ENCODE measurements at regions of chr21 and their contacts with region 1.

Region 1: GRCh38 chr21:16308269-16308668 is 578.5 kb downstream of the USP25 start:
- DNase-seq: no peak
- ATAC-seq: no peak
- H3K4me3 ChIP-seq: no peak overlapping the region
- H3K4me3 Mint-ChIP-seq: no peak overlapping the region
- H3K27ac ChIP-seq: no peak overlapping the region
- H3K27ac Mint-ChIP-seq: no peak overlapping the region
- H3K4me1 ChIP-seq: no peaks in the 10 kb centered on the region
- H3K4me1 Mint-ChIP-seq: peaks cover 3 to 7% (median 3%) of the 10 kb centered on the region in 3 donors
- H3K27me3 ChIP-seq: no peaks in the 10 kb centered on the region
- H3K27me3 Mint-ChIP-seq: no peaks in the 10 kb centered on the region

Region 2: DNA sequence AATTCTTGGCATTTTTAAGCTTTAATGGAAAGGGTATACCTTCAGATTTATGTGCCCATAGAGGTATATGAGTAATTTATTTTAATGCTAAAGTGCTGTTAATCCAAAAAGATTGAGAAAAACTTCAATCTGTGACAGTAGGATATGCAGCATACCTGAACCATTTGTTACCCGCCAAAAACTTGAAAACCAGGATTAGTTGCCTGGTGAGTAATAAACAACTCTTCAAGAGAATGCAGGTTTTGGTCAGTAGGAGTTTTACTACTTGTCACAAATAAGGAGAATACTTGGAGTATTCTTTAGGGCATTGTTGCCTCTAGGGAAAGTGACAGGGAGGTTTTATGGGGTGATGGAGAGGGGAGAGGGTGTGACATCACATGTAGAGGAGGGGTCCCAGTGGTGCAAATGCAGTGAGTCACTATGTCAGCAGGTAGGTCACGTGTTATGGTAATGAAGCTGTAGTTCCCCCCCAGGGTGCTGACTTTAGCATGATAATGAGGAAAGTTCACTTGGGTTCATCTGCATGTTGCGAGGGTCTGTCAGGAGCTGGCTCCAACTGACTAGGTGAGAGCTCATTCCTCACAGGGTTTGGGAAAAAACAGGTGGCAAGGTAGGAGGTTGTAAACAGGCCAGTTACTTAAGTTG is 555.4 kb before region 1 on chr21:
- CTCF ChIA-PET with region 1: no interaction called
- POLR2A ChIA-PET with region 1: interaction called in 1 of 2 experiments, 10 read pairs
- DNase-seq: no peak
- ATAC-seq: no peak
- H3K4me3 ChIP-seq: no peak overlapping the region
- H3K4me3 Mint-ChIP-seq: peak overlapping the region in 1 of 3 donors; percentile 41
- H3K27ac ChIP-seq: no peak overlapping the region
- H3K27ac Mint-ChIP-seq: no peak overlapping the region
- H3K4me1 ChIP-seq: peaks cover 10 to 25% of the 10 kb centered on the region in 2 experiments
- H3K4me1 Mint-ChIP-seq: peaks cover 85 to 89% (median 86%) of the 10 kb centered on the region in 3 donors
- H3K27me3 ChIP-seq: no peaks in the 10 kb centered on the region
- H3K27me3 Mint-ChIP-seq: no peaks in the 10 kb centered on the region

Region 3: GRCh38 chr21:16279731-16280581 is 28.3 kb before region 1 on chr21:
- CTCF ChIA-PET with region 1: no interaction called
- POLR2A ChIA-PET with region 1: no interaction called
- DNase-seq: no peak
- ATAC-seq: no peak
- H3K4me3 ChIP-seq: no peak overlapping the region
- H3K4me3 Mint-ChIP-seq: no peak overlapping the region
- H3K27ac ChIP-seq: no peak overlapping the region
- H3K27ac Mint-ChIP-seq: no peak overlapping the region
- H3K4me1 ChIP-seq: no peaks in the 10 kb centered on the region
- H3K4me1 Mint-ChIP-seq: no peaks in the 10 kb centered on the region
- H3K27me3 ChIP-seq: no peaks in the 10 kb centered on the region
- H3K27me3 Mint-ChIP-seq: peaks cover 0 to 4% of the 10 kb centered on the region in 2 donors

Region 4: DNA sequence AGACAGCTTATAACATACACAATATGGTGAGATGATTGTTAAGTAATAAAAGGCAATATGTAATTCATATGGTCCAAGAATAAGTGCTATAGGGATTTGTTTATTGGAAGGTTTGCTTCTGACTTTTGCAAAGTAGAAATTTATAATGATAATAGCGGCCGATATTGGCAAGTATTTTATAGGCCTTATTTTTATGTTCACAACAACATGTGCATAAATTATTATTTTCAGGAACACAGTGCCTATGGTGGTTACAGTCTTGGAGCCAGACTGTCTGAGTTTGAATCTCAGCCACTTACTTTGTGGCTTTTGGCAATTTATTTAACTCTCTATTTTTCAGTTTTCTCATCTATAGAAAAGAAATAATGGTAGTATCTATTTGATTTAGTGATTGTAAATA is 29.0 kb after region 1 on chr21:
- CTCF ChIA-PET with region 1: no interaction called
- POLR2A ChIA-PET with region 1: no interaction called
- DNase-seq: no peak
- ATAC-seq: no peak
- H3K4me3 ChIP-seq: no peak overlapping the region
- H3K4me3 Mint-ChIP-seq: no peak overlapping the region
- H3K27ac ChIP-seq: no peak overlapping the region
- H3K27ac Mint-ChIP-seq: no peak overlapping the region
- H3K4me1 ChIP-seq: no peaks in the 10 kb centered on the region
- H3K4me1 Mint-ChIP-seq: no peaks in the 10 kb centered on the region
- H3K27me3 ChIP-seq: no peaks in the 10 kb centered on the region
- H3K27me3 Mint-ChIP-seq: no peaks in the 10 kb centered on the region

Region 5: DNA sequence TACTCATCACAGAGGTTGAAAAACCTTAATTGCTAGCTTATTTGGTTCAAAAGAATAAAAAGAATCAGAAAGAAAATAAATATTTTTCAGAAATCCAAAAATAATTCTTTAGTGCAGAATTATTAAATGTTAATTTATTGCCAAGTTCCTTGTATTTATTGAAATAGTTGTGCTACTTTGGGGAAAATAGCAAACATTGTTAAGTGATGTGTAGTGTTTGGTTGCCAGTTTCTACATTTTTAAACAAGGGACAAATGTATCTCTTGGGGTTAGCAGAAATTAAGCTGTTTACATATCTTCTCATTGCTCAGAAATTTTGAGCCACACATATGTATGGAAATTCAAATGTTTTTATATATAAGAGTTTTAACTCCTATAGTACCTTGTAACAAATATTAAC is 196.5 kb after region 1 on chr21:
- CTCF ChIA-PET with region 1: no interaction called
- POLR2A ChIA-PET with region 1: no interaction called
- DNase-seq: no peak
- ATAC-seq: no peak
- H3K4me3 ChIP-seq: no peak overlapping the region
- H3K4me3 Mint-ChIP-seq: no peak overlapping the region
- H3K27ac ChIP-seq: no peak overlapping the region
- H3K27ac Mint-ChIP-seq: no peak overlapping the region
- H3K4me1 ChIP-seq: no peaks in the 10 kb centered on the region
- H3K4me1 Mint-ChIP-seq: no peaks in the 10 kb centered on the region
- H3K27me3 ChIP-seq: no peaks in the 10 kb centered on the region
- H3K27me3 Mint-ChIP-seq: no peaks in the 10 kb centered on the region

Measured in T-cell (primary cell).